ENCODE measurements at regions of chr1 and their contacts with region 1.

Region 1: DNA sequence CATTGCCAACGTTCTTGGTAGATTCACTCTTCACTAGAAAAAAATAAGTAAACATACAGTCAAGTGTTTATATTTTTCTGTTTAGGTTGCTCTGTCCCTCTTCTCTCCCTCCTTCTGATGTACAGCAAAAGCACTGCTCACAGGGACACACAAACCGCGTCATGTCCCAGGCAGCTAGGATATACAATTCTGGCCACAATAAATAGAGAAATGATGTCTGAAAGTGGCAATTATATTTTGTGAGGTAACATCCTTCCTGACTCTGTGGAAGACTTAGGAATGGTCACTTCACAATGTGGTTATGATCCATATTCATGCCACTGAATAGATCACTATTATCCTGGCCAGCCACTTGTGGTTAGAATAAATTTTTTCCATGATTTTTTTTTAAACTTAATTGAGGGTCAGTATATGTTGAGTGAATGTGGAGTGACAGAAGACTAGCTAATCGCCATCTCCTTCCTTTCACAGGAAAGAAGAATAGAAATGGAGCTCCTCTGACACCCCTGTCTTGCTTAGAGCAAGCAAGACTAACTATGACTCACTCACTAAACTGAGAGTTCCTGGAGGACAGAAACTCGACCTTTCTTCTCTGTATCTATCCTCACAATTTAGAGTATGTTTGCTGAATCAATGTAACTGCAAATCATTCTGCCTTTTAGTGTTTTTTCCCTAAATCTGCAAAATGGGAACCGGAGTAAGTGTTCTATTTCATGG is 54.0 kb downstream of the ZNHIT6 start:
- DNase-seq: no peak
- ATAC-seq: peak; percentile 71
- H3K4me3 ChIP-seq: no peak overlapping the region
- H3K27ac ChIP-seq: peak overlapping the region; percentile 74
- H3K4me1 ChIP-seq: peaks cover 33% of the 10 kb centered on the region
- H3K27me3 ChIP-seq: no peaks in the 10 kb centered on the region
- CTCF ChIP-seq: no peak

Region 2: GRCh38 chr1:85413169-85413568 is 241.1 kb before region 1 on chr1:
- CTCF ChIA-PET with region 1: no interaction called
- POLR2A ChIA-PET with region 1: interaction called, 13 read pairs
- in situ Hi-C with region 1: no loop called
- intact Hi-C with region 1: no loop called
- DNase-seq: no peak
- ATAC-seq: no peak
- H3K4me3 ChIP-seq: no peak overlapping the region
- H3K27ac ChIP-seq: no peak overlapping the region
- H3K4me1 ChIP-seq: peaks cover 18% of the 10 kb centered on the region; the same call in 1 of the 2 replicates
- H3K27me3 ChIP-seq: no peaks in the 10 kb centered on the region
- CTCF ChIP-seq: no peak

Region 3: DNA sequence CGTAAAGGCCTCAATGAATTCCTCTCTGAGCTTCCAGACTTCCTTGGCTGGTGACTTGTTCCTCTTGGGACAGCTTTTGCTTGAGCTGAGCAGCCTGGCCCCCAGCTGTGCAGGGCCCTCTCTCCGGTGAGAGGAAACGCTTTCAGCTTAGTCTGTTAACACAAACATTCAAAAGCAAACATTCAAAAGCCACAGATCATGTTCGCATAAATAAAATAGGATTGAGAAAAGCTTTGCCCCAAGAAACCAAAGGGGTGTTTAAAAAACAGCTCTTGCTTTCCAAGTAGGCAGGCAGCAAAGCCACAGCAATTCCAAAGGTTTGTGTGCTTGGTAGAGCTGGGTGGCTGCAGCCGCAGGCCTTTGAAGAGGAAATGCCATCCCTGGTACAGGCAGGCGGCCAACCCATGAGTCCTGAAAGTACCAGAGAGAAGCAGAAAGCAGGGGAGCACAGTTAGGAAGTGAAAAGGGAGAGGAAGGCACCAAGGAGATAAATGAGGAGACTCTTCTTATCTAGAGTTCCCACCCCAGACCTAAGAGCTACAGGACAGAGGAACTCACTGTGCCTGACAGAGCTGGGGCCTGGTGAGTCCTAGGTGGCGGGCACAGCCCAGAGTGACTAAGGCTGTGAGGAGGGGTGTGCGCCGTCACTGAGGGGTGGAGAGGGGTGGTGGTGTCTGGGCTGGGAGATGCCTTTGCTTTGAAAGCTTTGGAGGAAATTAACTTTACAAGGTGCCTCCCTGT is 25.3 kb before region 1 on chr1:
- CTCF ChIA-PET with region 1: no interaction called
- POLR2A ChIA-PET with region 1: interaction called, 14 read pairs
- in situ Hi-C with region 1: no loop called
- intact Hi-C with region 1: no loop called
- DNase-seq: peak; percentile 95
- ATAC-seq: peak; percentile 97
- H3K4me3 ChIP-seq: peak overlapping the region; percentile 15 to 45
- H3K27ac ChIP-seq: peak overlapping the region; percentile 96
- H3K4me1 ChIP-seq: peaks cover 31% of the 10 kb centered on the region
- H3K27me3 ChIP-seq: no peaks in the 10 kb centered on the region
- CTCF ChIP-seq: no peak

Region 4: GRCh38 chr1:86753700-86754099 is 1099.5 kb after region 1 on chr1:
- CTCF ChIA-PET with region 1: no interaction called
- POLR2A ChIA-PET with region 1: no interaction called
- in situ Hi-C with region 1: no loop called
- intact Hi-C with region 1: no loop called
- DNase-seq: no peak
- ATAC-seq: 0 out of 2 replicates have a peak, but pooled peaks have one; percentile 44
- H3K4me3 ChIP-seq: no peak overlapping the region
- H3K27ac ChIP-seq: no peak overlapping the region
- H3K4me1 ChIP-seq: no peaks in the 10 kb centered on the region
- H3K27me3 ChIP-seq: peaks cover 24% of the 10 kb centered on the region
- CTCF ChIP-seq: peak; percentile 51